ENCODE measurements at regions of chr4 and their contacts with region 1.

Region 1: DNA sequence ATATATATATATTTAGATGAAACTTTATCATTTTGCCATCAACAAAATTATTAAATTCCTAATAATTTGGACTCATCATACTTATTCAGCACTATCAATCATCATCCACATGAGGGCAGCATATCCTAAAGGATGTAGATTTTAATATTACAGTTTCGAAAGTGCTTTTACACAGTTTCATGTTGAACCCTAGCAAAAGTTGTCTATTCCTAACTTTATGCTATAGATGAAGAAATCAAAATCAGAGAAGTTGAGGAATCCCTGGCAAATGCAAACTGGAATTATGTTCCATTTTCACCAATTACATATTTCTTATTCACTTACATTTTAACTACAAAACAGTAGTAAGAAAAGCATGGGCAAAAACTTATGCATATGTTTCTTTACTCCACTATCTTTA is 36.6 kb upstream of the UGT2A1 start:
- DNase-seq: no peak
- H3K4me3 ChIP-seq: no peak overlapping the region
- H3K27ac ChIP-seq: no peak overlapping the region
- H3K4me1 ChIP-seq: no peaks in the 10 kb centered on the region
- H3K27me3 ChIP-seq: no peaks in the 10 kb centered on the region
- CTCF ChIP-seq: peak; percentile 22 to 56 (median 37)
- POLR2A ChIP-seq: no peak

Region 2: DNA sequence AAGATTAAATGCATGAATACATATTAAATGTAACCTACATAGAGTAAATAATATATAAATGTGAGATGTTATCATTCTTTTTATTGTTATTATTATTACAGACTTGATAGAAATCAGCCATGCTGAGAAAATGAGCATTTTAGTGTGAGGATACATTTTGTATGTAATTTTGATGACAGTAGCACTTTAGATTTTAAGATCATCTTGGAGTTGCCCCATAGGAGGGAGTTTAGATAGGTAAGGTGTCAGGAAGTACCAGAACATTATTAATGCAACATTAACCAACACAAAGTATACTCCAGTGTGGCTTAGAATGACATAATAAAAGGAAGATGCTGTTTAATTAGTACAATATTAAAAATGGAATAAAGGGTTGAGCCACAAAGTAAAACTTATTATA is 1734.7 kb before region 1 on chr4:
- intact Hi-C with region 1: loop called (anchors 5 kb)
- DNase-seq: no peak
- H3K4me3 ChIP-seq: no peak overlapping the region
- H3K27ac ChIP-seq: no peak overlapping the region
- H3K4me1 ChIP-seq: no peaks in the 10 kb centered on the region
- H3K27me3 ChIP-seq: no peaks in the 10 kb centered on the region
- CTCF ChIP-seq: no peak
- POLR2A ChIP-seq: no peak

Region 3: DNA sequence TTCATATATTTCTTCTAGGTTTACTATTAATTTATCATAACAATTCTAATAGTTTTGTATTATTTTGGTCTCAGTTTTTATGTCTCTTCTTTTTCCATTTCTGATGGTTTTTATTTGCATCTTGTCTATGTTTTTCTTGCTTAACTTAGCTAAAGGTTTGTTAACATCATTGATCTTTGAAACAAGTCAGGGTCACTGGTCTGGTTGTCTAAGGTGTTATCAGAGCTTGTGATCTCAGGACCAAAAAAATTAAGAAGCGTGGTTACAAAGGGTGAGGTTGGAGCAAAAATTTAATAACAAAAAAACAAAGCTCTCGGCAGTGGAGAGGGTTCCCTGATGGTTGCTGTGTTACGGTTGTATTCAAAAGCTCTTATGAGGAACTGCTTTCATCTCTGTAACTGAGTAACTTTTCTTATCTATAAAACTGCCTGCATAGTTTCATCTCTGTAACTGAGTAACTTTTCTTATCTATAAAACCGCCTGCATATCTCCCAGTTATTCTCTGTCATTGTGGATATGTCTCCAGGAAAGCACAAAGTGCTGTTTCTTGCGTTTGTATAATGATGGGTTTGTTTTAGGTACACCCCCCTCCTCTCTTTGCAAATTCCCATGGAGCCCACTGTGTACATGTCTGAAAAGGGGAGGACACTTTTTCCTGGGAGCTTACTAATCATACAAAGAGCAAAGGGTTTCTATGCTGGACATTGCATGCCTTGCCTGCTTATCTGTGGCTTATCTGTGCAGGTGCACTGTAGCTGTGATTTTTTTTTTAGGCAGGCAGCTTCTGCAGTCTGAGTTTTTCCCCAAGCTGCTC is 956.7 kb before region 1 on chr4:
- intact Hi-C with region 1: no loop called
- DNase-seq: no peak
- H3K4me3 ChIP-seq: no peak overlapping the region
- H3K27ac ChIP-seq: no peak overlapping the region
- H3K4me1 ChIP-seq: no peaks in the 10 kb centered on the region
- H3K27me3 ChIP-seq: no peaks in the 10 kb centered on the region
- CTCF ChIP-seq: no peak
- POLR2A ChIP-seq: no peak

Region 4: DNA sequence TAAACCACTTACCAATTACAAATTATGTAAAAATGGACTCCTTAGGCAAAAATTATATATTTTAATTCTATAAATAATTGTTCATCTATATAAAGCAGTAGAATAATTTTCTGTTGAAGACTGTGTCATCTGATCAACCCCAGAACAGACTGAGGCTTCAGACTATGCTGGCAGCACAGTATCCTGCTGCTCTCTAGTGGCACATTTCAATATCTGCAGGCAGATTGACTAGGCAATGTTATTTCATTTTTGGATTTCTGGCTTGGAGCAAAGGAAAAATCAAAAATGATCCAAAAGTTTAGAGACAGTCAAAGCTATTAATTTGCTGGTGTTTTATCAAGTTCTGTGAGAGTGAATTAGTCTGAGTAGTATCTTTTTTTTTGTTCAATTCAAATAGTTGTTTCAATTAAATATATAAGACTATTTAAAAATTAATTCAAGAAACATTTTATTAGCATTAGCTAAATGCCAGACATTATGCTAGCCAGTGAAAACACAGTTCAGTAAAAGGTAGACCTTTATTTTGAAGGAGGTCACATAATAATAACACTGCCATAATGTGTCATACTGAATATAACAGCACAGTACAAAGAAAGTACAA is 191.7 kb after region 1 on chr4:
- intact Hi-C with region 1: loop called (anchors 5 kb)
- DNase-seq: no peak
- H3K4me3 ChIP-seq: no peak overlapping the region
- H3K27ac ChIP-seq: no peak overlapping the region
- H3K4me1 ChIP-seq: no peaks in the 10 kb centered on the region
- H3K27me3 ChIP-seq: no peaks in the 10 kb centered on the region
- CTCF ChIP-seq: peak; percentile 10 to 76 (median 52)
- POLR2A ChIP-seq: no peak